Heart left ventricle (tissue), 16 donors: ENCODE measurements at regions of chr7 and their contacts with region 1.

Region 1: GRCh38 chr7:93921607-93922566 is at the start of gene GNG11:
- DNase-seq: peak; percentile 87 to 93 (median 89)
- ATAC-seq: peak; percentile 92 to 98 (median 96)
- H3K4me3 ChIP-seq: peak within 1 kb of the TSS; percentile 43 to 79 (median 66)
- H3K27ac ChIP-seq: peak within 1 kb of the TSS; percentile 83 to 97 (median 94)
- H3K4me1 ChIP-seq: peaks cover 0 to 29% (median 6%) of the 10 kb centered on the region in 12 donors
- H3K27me3 ChIP-seq: peaks cover 0 to 5% (median 0%) of the 10 kb centered on the region in 9 donors
- CTCF ChIP-seq: peak in 2 of 12 donors; percentile 9 to 14
- POLR2A ChIP-seq: peak in 1 of 2 donors; percentile 73
- total RNA-seq, gene GNG11: 10.5 to 29.1 (median 18.0) TPM

Region 2: GRCh38 chr7:93973134-93973533 is 51.2 kb after region 1 on chr7:
- intact Hi-C with region 1: loop called in 2 of 10 experiments (anchors 5 kb)
- DNase-seq: no peak
- ATAC-seq: no peak
- H3K4me3 ChIP-seq: no peak overlapping the region
- H3K27ac ChIP-seq: no peak overlapping the region
- H3K4me1 ChIP-seq: peaks cover 0 to 4% (median 0%) of the 10 kb centered on the region in 12 donors
- H3K27me3 ChIP-seq: no peaks in the 10 kb centered on the region
- CTCF ChIP-seq: no peak
- POLR2A ChIP-seq: no peak

Region 3: DNA sequence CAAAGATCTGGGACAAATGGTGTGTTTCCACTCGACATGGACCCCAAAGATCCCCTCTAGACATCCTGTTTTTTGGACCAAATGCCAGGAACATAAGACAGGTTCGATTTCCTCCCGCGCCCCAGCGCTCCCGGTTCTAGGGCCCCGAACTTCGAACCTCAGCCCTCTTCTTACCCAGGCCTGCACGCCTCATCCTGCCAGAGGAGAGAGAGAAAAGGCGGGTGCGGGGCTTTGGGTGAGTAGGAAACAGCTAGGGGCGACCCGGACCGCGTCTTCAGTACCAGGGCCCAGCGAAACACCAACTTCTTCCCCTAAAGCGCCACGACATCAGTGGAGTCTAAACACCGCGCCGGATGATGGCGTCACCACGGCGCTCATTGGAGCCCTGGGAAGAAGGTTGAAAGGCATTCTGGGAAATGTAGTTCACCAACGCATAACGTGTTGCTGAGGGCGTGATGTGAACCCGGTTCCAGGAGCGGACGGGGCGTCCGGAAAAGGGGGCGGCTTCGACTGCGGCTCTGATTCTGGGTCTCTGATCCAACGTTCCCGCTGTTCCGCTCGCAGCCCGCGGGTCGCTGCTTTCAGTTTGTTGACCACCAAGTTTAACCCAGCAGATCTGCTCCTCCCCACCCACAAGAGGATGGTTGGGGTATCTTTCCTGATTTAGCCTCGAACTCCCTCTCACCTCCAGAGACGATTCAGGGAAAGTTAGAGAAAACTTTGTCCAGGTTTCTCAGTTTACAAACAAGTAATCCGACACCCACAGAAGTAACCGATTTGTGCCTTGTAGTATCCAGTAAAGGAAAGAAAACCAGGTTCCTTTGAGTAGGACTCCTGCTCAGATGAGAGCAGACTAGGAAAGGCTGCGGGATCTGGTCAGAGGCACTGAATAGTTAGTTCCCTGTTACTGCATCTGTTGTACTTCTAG is 82.4 kb after region 1 on chr7 and contains the start of gene BET1:
- intact Hi-C with region 1: loop called in 5 of 10 experiments (anchors 5 kb)
- DNase-seq: peak; percentile 94 to 97 (median 96)
- ATAC-seq: peak; percentile 98 to 100 (median 100)
- H3K4me3 ChIP-seq: peak within 1 kb of the TSS; percentile 70 to 91 (median 87)
- H3K27ac ChIP-seq: peak within 1 kb of the TSS; percentile 47 to 93 (median 86)
- H3K4me1 ChIP-seq: peaks cover 0 to 29% (median 19%) of the 10 kb centered on the region in 12 donors
- H3K27me3 ChIP-seq: peaks cover 0 to 5% (median 0%) of the 10 kb centered on the region in 9 donors
- CTCF ChIP-seq: no peak
- POLR2A ChIP-seq: peak in 1 of 2 donors; percentile 74
- total RNA-seq, gene BET1: 8.1 to 16.5 (median 11.5) TPM

Region 4: GRCh38 chr7:94160719-94161435 is 239.0 kb after region 1 on chr7:
- intact Hi-C with region 1: no loop called
- DNase-seq: no peak
- ATAC-seq: no peak
- H3K4me3 ChIP-seq: peak overlapping the region in 1 of 12 donors; percentile 23
- H3K27ac ChIP-seq: peak overlapping the region in 1 of 12 donors; percentile 76
- H3K4me1 ChIP-seq: peaks cover 0 to 5% (median 0%) of the 10 kb centered on the region in 12 donors
- H3K27me3 ChIP-seq: no peaks in the 10 kb centered on the region
- CTCF ChIP-seq: no peak
- POLR2A ChIP-seq: no peak